Head of caudate nucleus (tissue), 42 donors: ENCODE measurements at regions of chr11 and their contacts with region 1.

Region 1: DNA sequence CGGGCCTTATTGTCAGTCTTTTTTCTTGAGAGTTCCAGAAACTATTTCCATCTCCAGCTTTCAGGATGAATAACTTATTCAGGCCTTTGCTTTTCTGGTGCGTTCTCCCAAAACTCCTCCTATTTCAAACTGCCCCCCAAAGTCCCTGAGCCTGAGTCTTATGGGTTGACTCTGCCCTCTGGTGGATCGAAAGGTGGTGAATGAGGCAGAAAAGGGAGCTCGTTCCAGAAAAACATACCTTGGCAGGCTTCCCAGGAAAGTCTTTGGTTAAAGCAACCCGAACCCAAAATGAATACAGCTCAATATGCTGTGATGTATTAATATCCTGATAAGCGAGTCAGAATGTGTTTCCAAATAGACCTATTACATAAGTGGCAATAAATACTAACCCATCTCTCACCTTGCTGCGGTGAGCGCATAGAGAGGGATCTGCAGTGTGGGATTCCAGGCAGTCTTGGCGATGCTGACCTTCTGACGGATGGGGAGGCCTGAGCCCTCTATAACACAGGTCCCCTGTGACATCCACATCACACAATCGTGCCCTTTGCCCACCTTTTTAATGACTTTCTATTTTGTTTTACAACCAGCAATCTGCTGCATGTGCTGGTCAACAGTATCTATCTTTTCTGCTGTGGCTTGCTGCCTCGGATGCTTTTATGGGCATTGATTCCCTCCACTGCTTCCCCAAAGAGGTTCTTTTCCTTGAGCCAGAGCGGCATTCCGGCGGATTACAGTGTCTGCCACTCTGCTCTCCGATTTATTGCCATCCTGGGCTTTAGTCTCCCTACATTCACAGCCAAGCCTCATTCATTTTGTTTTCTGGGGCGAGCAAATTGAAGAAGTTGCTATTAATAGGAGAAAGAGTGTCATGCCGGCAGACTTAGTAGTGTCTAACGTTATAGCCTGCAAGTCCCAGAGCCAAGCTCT is 756.8 kb downstream of the NTM start:
- DNase-seq: peak; percentile 33 to 93 (median 74)

Region 2: GRCh38 chr11:131910523-131911387 is 216.5 kb before region 1 on chr11:
- intact Hi-C with region 1: loop called (anchors 5 kb)
- DNase-seq: peak in 25 of 42 donors; percentile 16 to 73 (median 49)